ENCODE measurements at regions of chr4 and their contacts with region 1.

Region 1: DNA sequence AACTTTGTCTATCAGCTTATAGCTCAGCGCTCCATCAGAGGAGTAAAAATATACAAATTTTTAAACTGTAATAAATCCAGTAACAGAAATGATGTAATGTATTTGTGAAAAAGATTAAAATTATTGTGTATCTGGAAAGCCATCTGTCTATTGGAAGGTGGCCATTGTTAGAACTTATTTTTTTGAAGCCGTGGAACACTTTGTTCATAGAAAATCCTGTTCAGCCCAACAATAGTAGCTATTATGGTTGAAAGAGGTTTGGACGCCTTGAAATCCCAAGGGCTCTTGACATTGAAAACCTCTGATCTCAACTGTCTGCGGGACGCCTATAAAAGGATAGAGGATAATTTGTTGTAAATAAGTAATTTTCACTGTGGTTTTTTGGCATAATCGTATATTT is 98.3 kb downstream of the RAPGEF2 start:
- DNase-seq: no peak
- ATAC-seq: no peak
- H3K4me3 ChIP-seq: no peak overlapping the region
- H3K27ac ChIP-seq: no peak overlapping the region
- H3K4me1 ChIP-seq: peaks cover 1% of the 10 kb centered on the region
- H3K27me3 ChIP-seq: no peaks in the 10 kb centered on the region
- CTCF ChIP-seq: no peak

Region 2: DNA sequence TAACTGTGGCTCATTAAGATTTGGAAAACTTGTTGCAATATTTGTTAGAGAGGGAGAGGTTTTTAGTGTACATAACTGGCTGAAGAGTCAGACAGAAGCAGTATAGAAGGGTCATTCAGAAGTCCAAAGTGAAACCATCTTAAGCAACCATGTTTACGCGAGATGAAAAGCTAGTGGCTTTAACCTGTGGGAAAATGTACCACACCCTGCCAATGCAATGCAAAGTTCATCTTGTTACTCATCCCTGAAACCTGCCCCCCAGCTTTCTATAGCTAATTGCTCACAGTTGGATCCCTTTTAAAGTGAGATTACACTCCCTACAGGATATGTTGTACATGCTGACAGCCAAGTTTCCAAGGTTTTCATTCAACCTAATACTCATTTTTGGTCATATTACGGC is 195.0 kb before region 1 on chr4:
- CTCF ChIA-PET with region 1: no interaction called
- POLR2A ChIA-PET with region 1: no interaction called
- intact Hi-C with region 1: no loop called
- DNase-seq: peak; percentile 86
- ATAC-seq: peak; percentile 74
- H3K4me3 ChIP-seq: peak overlapping the region; percentile 42
- H3K27ac ChIP-seq: peak overlapping the region; percentile 88
- H3K4me1 ChIP-seq: peaks cover 42% of the 10 kb centered on the region
- H3K27me3 ChIP-seq: no peaks in the 10 kb centered on the region
- CTCF ChIP-seq: no peak

Region 3: DNA sequence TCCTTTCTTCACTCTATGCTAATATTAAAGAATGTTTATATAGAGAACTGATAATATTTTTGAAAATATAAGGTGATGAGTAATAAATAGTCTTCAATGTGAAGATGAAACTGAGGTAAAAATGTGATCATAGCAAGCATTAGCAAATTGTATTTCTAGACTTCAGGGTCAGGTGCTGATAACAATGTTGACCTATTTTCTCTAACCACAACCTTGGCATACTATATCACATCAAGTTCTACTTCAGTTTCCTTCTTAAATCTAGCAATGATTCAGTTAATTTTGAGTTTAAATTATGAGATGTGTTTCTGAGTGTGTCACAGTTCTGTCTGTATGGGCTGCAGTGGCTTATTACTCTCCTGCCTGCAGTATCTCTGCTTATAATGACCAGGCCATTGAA is 111.1 kb after region 1 on chr4:
- CTCF ChIA-PET with region 1: no interaction called
- POLR2A ChIA-PET with region 1: no interaction called
- intact Hi-C with region 1: loop called (anchors 5 kb)
- DNase-seq: no peak
- ATAC-seq: no peak
- H3K4me3 ChIP-seq: no peak overlapping the region
- H3K27ac ChIP-seq: no peak overlapping the region
- H3K4me1 ChIP-seq: peaks cover 15% of the 10 kb centered on the region
- H3K27me3 ChIP-seq: no peaks in the 10 kb centered on the region
- CTCF ChIP-seq: no peak

Region 4: GRCh38 chr4:159384632-159385031 is 183.5 kb after region 1 on chr4:
- CTCF ChIA-PET with region 1: no interaction called
- POLR2A ChIA-PET with region 1: no interaction called
- intact Hi-C with region 1: loop called (anchors 5 kb)
- DNase-seq: no peak
- ATAC-seq: no peak
- H3K4me3 ChIP-seq: no peak overlapping the region
- H3K27ac ChIP-seq: no peak overlapping the region
- H3K4me1 ChIP-seq: no peaks in the 10 kb centered on the region
- H3K27me3 ChIP-seq: no peaks in the 10 kb centered on the region
- CTCF ChIP-seq: no peak; the same call in 1 of the 2 replicates